GM12878 (cell line): ENCODE measurements at regions of chr12 and their contacts with region 1.

Region 1: DNA sequence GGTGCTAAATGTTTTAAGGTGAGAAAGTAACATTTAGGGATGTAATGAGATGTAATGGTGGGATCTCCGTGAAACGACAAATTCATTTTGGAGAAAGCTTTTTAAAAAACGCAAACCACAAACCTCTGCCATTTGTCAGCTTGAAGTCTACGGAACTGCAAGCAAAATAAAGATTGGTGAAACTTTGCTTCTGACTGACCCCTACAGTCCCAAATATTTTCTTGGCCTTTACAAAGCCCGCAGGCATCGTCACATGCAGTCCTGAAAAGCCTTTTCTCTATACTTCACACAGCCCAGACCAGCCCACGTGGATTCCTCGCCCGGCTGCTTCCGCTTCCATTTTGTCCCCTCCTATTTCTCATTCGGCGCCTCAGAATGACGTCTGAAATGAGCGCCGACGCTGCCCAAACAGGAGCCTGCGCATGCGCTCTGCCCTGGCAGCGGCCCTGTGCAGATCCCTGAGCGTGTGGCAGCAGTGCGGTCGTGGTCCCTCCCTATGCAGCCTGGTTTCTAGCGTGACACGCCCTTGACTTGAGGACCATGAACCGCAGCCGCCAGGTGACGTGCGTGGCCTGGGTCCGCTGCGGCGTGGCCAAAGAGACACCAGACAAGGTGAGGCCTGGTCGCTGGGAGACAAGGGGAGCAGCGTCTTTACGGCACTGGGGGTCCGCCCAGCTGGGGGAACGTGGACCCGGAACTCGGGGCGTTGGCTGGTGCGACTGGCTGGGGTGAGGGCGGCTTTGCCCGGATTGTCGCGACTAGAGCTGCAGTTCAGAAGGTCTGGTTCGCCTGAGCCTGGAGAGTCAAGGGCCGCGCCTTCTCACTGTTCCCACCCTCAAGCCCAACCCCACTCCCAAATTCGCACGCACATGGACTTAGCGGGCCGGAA is at the start of gene PWP1:
- DNase-seq: peak; percentile 84
- ATAC-seq: peak; percentile 96
- H3K4me3 ChIP-seq: peak within 1 kb of the TSS; percentile 93
- H3K27ac ChIP-seq: peak within 1 kb of the TSS; percentile 72
- H3K4me1 ChIP-seq: peaks cover 3% of the 10 kb centered on the region; the same call in 1 of the 2 replicates
- H3K27me3 ChIP-seq: no peaks in the 10 kb centered on the region
- CTCF ChIP-seq: no peak
- EP300 ChIP-seq: peak in 1 of 2 experiments; percentile 38; a peak in 1 of 4 replicates
- POLR2A ChIP-seq: peak; percentile 99
- RAD21 ChIP-seq: no peak
- polyA plus RNA-seq, gene PWP1: 244 to 283 TPM

Region 2: GRCh38 chr12:107670999-107671643 is 14.5 kb before region 1 on chr12:
- CTCF ChIA-PET with region 1: interaction called, 31 read pairs
- POLR2A ChIA-PET with region 1: no interaction called
- RAD21 ChIA-PET with region 1: interaction called, 3 read pairs
- SMC1A ChIA-PET with region 1: no interaction called
- in situ Hi-C with region 1: no loop called
- intact Hi-C with region 1: no loop called
- DNase-seq: no peak
- ATAC-seq: peak; percentile 91
- H3K4me3 ChIP-seq: no peak overlapping the region
- H3K27ac ChIP-seq: no peak overlapping the region
- H3K4me1 ChIP-seq: no peaks in the 10 kb centered on the region
- H3K27me3 ChIP-seq: peaks cover 5% of the 10 kb centered on the region in 2 experiments; a peak in 2 of 4 replicates
- CTCF ChIP-seq: peak; percentile 69 to 89 (median 84)
- EP300 ChIP-seq: no peak
- POLR2A ChIP-seq: no peak
- RAD21 ChIP-seq: peak; percentile 10; the same call in 1 of the 2 replicates

Region 3: GRCh38 chr12:107731366-107731765 is 45.8 kb after region 1 on chr12:
- CTCF ChIA-PET with region 1: no interaction called
- POLR2A ChIA-PET with region 1: no interaction called
- RAD21 ChIA-PET with region 1: no interaction called
- SMC1A ChIA-PET with region 1: no interaction called
- in situ Hi-C with region 1: no loop called
- intact Hi-C with region 1: no loop called
- DNase-seq: no peak
- ATAC-seq: peak; percentile 82
- H3K4me3 ChIP-seq: no peak overlapping the region
- H3K27ac ChIP-seq: no peak overlapping the region
- H3K4me1 ChIP-seq: peaks cover 4% of the 10 kb centered on the region
- H3K27me3 ChIP-seq: no peaks in the 10 kb centered on the region
- CTCF ChIP-seq: no peak
- EP300 ChIP-seq: no peak; a peak in 1 of 4 replicates
- POLR2A ChIP-seq: no peak
- RAD21 ChIP-seq: no peak

Region 4: GRCh38 chr12:107903341-107904061 is 217.9 kb after region 1 on chr12:
- CTCF ChIA-PET with region 1: interaction called, 7 read pairs
- POLR2A ChIA-PET with region 1: no interaction called
- RAD21 ChIA-PET with region 1: no interaction called
- SMC1A ChIA-PET with region 1: no interaction called
- in situ Hi-C with region 1: no loop called
- intact Hi-C with region 1: loop called (anchors 5 kb)
- DNase-seq: peak; percentile 40
- ATAC-seq: peak; percentile 99
- H3K4me3 ChIP-seq: peak overlapping the region; percentile 62; the same call in 1 of the 2 replicates
- H3K27ac ChIP-seq: no peak overlapping the region
- H3K4me1 ChIP-seq: no peaks in the 10 kb centered on the region; the same call in 1 of the 2 replicates
- H3K27me3 ChIP-seq: no peaks in the 10 kb centered on the region; a peak in 2 of 4 replicates
- CTCF ChIP-seq: no peak
- EP300 ChIP-seq: no peak
- POLR2A ChIP-seq: peak; percentile 78
- RAD21 ChIP-seq: no peak